Ascending aorta (tissue), 2 donors: ENCODE measurements at regions of chr9 and their contacts with region 1.

Region 1: GRCh38 chr9:35102926-35103659 is at the start of gene STOML2:
- DNase-seq: peak; percentile 84 to 96
- H3K4me3 ChIP-seq: peak within 1 kb of the TSS; percentile 71 to 78
- H3K27ac ChIP-seq: peak within 1 kb of the TSS; percentile 81 to 90
- H3K4me1 ChIP-seq: peaks cover 4 to 12% of the 10 kb centered on the region in 2 donors
- H3K27me3 ChIP-seq: no peaks in the 10 kb centered on the region
- CTCF ChIP-seq: no peak
- total RNA-seq, gene STOML2: 94.2 TPM

Region 2: GRCh38 chr9:34989003-34989945 is 113.8 kb before region 1 on chr9 and contains the start of gene DNAJB5:
- intact Hi-C with region 1: loop called (anchors 2 kb)
- DNase-seq: peak; percentile 99 to 100
- H3K4me3 ChIP-seq: peak within 1 kb of the TSS; percentile 81 to 100
- H3K27ac ChIP-seq: peak within 1 kb of the TSS; percentile 98 to 100
- H3K4me1 ChIP-seq: peaks cover 13 to 39% of the 10 kb centered on the region in 2 donors
- H3K27me3 ChIP-seq: no peaks in the 10 kb centered on the region
- CTCF ChIP-seq: no peak
- total RNA-seq, gene DNAJB5: 40.8 TPM